Activated CD8-positive, alpha-beta T cell treated with anti-CD3 and anti-CD28 coated beads for 36 hours (primary cell): ENCODE measurements at regions of chr2 and their contacts with region 1.

Region 1: GRCh38 chr2:218691234-218691633 is 19.3 kb downstream of the STK36 start:
- DNase-seq: no peak
- ATAC-seq: no peak
- H3K4me3 Mint-ChIP-seq: no peak overlapping the region
- H3K27ac Mint-ChIP-seq: no peak overlapping the region
- H3K4me1 Mint-ChIP-seq: peaks cover 2% of the 10 kb centered on the region
- H3K27me3 Mint-ChIP-seq: no peaks in the 10 kb centered on the region
- CTCF ChIP-seq: no peak

Region 2: GRCh38 chr2:217672491-217672900 is 1018.7 kb before region 1 on chr2:
- CTCF ChIA-PET with region 1: no interaction called
- POLR2A ChIA-PET with region 1: no interaction called
- intact Hi-C with region 1: no loop called
- DNase-seq: no peak
- ATAC-seq: no peak
- H3K4me3 Mint-ChIP-seq: no peak overlapping the region
- H3K27ac Mint-ChIP-seq: no peak overlapping the region
- H3K4me1 Mint-ChIP-seq: no peaks in the 10 kb centered on the region
- H3K27me3 Mint-ChIP-seq: no peaks in the 10 kb centered on the region
- CTCF ChIP-seq: no peak

Region 3: DNA sequence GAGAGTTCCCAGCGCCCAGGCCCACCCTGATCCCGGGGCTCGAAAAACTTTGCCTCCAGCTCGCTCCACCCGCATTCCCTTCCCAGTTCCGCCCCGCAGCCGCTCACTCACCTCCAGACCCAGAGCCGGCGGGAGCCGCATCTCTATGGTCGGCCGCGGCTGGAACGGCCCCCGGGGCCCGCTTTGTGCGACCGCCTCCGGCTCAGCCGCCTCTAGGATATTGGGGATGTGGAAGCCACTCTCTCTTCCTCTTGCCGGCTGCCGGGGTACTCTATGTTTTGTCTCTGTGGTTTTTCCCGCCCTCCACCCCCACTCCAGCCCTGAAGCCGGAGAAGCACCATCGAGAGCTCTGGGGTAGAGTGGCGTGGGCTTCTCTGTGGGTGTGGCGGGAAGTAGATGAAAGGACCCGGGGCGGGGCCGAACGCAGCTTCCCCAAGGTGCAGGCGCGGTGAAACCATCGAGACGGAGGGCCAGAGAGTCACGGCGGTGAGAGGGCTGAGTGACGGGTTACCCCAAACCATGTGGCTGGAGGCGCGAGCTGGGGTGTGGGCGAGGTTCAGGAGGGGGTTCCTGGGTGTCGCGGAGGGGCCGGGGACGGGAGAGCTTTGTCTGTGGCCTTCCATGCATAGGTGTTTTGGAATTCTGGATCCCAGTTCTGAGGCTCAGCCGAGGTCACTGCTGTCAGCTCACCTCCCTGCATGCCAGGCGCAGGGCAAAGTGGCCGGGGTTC is 31.8 kb before region 1 on chr2 and contains the starts of genes BCS1L and ZNF142:
- CTCF ChIA-PET with region 1: interaction called, 19 read pairs
- POLR2A ChIA-PET with region 1: no interaction called
- intact Hi-C with region 1: no loop called
- DNase-seq: peak; percentile 99
- ATAC-seq: peak; percentile 97
- H3K4me3 Mint-ChIP-seq: peak within 1 kb of the TSS; percentile 92
- H3K27ac Mint-ChIP-seq: peak within 1 kb of the TSS; percentile 92
- H3K4me1 Mint-ChIP-seq: peaks cover 29% of the 10 kb centered on the region
- H3K27me3 Mint-ChIP-seq: no peaks in the 10 kb centered on the region
- CTCF ChIP-seq: no peak
- total RNA-seq, gene BCS1L: 69.6 to 76.3 TPM
- total RNA-seq, gene ZNF142: 30.4 to 33.7 TPM

Region 4: GRCh38 chr2:218679119-218679518 is 12.1 kb before region 1 on chr2:
- CTCF ChIA-PET with region 1: interaction called, 15 read pairs
- POLR2A ChIA-PET with region 1: no interaction called
- intact Hi-C with region 1: no loop called
- DNase-seq: no peak
- ATAC-seq: no peak
- H3K4me3 Mint-ChIP-seq: no peak overlapping the region
- H3K27ac Mint-ChIP-seq: no peak overlapping the region
- H3K4me1 Mint-ChIP-seq: no peaks in the 10 kb centered on the region
- H3K27me3 Mint-ChIP-seq: no peaks in the 10 kb centered on the region
- CTCF ChIP-seq: no peak

Region 5: DNA sequence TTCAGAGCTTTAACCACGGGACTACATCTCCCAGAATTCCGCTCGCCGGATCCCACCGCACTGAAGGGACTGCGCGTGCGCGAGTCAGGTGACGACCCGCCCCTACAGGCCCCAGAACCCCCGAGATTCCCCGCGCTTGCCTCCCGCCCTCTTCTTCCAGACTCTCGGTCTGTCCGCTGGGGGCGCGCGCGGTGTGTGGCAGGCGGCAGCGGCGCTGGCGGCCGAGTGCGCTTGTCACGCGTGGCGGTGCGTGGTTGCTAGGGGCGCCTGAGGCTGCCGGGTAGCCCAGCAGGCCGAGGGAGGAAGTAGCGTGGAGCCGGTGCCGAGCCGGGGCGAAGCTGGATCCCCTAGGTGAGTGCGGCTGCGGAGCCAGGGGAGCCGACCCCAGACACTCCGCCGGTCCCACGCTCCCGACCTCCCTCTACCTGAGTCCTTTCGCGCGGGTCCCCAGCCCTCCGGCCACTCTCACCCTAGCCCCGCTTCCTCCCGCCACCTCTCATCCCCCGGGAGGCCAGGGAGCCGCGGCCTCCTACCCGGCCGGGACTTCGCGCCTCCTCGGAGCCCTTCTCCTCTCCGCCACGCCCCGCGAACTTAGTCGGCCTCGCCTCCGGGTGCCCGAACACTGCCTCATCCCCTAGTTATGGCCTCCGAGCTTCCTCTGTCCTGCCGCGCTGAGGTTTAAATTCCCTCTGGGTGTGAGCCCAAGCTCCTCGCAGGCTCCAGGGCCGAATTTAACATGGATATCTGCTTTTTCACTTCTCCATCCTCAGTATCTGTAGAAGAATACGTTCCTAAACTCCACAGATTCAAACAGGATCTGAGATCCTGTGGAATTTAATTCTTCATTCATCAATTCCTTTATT is 19.7 kb after region 1 on chr2 and contains the start of gene TTLL4:
- CTCF ChIA-PET with region 1: interaction called, 11 read pairs
- POLR2A ChIA-PET with region 1: no interaction called
- intact Hi-C with region 1: no loop called
- DNase-seq: peak; percentile 98
- ATAC-seq: peak; percentile 98
- H3K4me3 Mint-ChIP-seq: peak within 1 kb of the TSS; percentile 86
- H3K27ac Mint-ChIP-seq: peak within 1 kb of the TSS; percentile 77
- H3K4me1 Mint-ChIP-seq: peaks cover 17% of the 10 kb centered on the region
- H3K27me3 Mint-ChIP-seq: peaks cover 1% of the 10 kb centered on the region
- CTCF ChIP-seq: peak; percentile 87
- total RNA-seq, gene TTLL4: 32.2 to 36.6 TPM

Region 6: GRCh38 chr2:218860950-218861381 is 169.7 kb after region 1 on chr2:
- CTCF ChIA-PET with region 1: no interaction called
- POLR2A ChIA-PET with region 1: no interaction called
- intact Hi-C with region 1: no loop called
- DNase-seq: peak; percentile 21
- ATAC-seq: peak; percentile 35
- H3K4me3 Mint-ChIP-seq: no peak overlapping the region
- H3K27ac Mint-ChIP-seq: no peak overlapping the region
- H3K4me1 Mint-ChIP-seq: peaks cover 10% of the 10 kb centered on the region
- H3K27me3 Mint-ChIP-seq: peaks cover 68% of the 10 kb centered on the region
- CTCF ChIP-seq: no peak